B cell (primary cell): ENCODE measurements at regions of chr2 and their contacts with region 1.

Region 1: DNA sequence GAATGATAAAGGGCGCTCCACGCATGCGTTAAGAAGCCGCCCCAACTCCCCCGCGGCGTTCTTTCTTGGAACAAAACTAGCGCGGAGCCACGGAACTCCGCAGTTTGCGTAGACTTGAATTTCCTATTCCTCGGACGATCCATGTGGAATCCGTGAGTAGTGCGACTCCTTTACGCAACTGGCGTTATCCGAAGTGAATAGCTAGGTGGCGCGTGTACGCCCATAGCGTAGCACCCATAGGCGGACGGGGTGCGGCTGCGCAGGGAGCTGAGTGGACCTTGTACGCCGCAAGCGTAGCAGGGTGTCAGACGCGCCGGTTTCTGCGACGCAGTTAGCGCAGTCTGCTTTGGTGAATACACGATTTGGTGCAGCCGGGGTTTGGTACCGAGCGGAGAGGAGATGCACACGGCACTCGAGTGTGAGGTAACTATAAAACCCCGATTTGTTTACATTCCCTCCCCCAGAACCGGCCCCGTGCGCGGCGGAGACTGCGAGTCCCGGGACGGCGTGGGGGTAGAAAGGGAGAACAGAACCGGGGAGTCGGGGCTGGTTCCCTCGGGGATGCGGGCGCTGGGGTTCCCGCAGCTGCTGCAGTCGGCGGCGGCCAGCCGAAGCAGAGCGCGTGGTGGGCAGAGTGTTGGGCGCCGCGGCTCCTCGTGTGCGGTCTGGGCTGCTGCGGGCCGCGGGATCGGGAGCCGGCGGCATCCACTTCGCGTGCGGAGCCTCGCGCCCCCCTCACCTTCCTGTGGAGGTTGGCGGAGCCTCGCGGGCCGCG is at the start of gene SLC39A10:
- DNase-seq: peak; percentile 100
- ATAC-seq: peak; percentile 86
- H3K4me3 ChIP-seq: peak within 1 kb of the TSS; percentile 87 to 96 (median 93)
- H3K4me3 Mint-ChIP-seq: peak within 1 kb of the TSS; percentile 100
- H3K27ac ChIP-seq: peak within 1 kb of the TSS; percentile 98 to 99
- H3K27ac Mint-ChIP-seq: peak within 1 kb of the TSS; percentile 99
- H3K4me1 ChIP-seq: peaks cover 30 to 39% of the 10 kb centered on the region in 2 donors
- H3K4me1 Mint-ChIP-seq: peaks cover 55% of the 10 kb centered on the region
- H3K27me3 ChIP-seq: no peaks in the 10 kb centered on the region
- H3K27me3 Mint-ChIP-seq: no peaks in the 10 kb centered on the region
- CTCF ChIP-seq: no peak
- total RNA-seq, gene SLC39A10: 99.3 and 99.8 TPM in 2 replicates

Region 2: DNA sequence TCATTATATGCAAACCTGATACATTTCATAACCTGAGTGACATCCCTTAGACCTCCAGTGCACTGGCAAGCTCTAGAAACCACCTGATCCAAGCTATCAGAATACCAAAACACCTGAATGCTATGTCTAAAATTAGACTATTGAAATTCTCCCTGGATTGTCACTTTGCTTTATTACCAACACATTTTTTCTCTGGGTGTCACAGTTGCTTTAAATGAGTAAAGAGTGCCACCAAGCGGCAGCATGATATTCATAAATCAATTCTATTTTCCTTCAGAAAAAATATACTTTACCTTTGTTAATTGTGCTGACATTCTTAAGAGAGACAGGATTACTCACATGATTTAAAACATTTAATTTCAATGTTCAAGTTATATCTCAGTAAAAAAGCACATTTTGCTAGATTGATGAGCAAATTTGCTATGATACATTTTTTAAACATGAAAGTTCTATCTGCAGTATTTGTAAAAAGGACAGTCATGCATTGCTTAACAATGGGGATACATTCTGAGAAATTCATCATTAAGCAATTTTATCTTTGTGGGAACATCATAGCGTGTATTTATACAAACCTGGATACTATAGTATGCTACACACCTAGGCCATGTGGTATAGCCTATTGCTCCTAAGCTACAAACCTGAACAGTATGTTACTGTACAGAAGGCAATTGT is 338.5 kb before region 1 on chr2:
- CTCF ChIA-PET with region 1: interaction called, 11 read pairs
- POLR2A ChIA-PET with region 1: no interaction called
- intact Hi-C with region 1: no loop called
- DNase-seq: peak; percentile 53
- ATAC-seq: no peak
- H3K4me3 ChIP-seq: no peak overlapping the region
- H3K4me3 Mint-ChIP-seq: no peak overlapping the region
- H3K27ac ChIP-seq: no peak overlapping the region
- H3K27ac Mint-ChIP-seq: no peak overlapping the region
- H3K4me1 ChIP-seq: no peaks in the 10 kb centered on the region
- H3K4me1 Mint-ChIP-seq: no peaks in the 10 kb centered on the region
- H3K27me3 ChIP-seq: no peaks in the 10 kb centered on the region
- H3K27me3 Mint-ChIP-seq: no peaks in the 10 kb centered on the region
- CTCF ChIP-seq: peak; percentile 76

Region 3: GRCh38 chr2:195498176-195498575 is 158.9 kb before region 1 on chr2:
- CTCF ChIA-PET with region 1: interaction called, 192 read pairs
- POLR2A ChIA-PET with region 1: interaction called, 6 read pairs
- intact Hi-C with region 1: loop called (anchors 1 kb)
- DNase-seq: peak; percentile 75
- ATAC-seq: peak; percentile 36
- H3K4me3 ChIP-seq: no peak overlapping the region
- H3K4me3 Mint-ChIP-seq: no peak overlapping the region
- H3K27ac ChIP-seq: no peak overlapping the region
- H3K27ac Mint-ChIP-seq: peak overlapping the region; percentile 1
- H3K4me1 ChIP-seq: peaks cover 5 to 16% of the 10 kb centered on the region in 2 donors
- H3K4me1 Mint-ChIP-seq: peaks cover 19% of the 10 kb centered on the region
- H3K27me3 ChIP-seq: no peaks in the 10 kb centered on the region
- H3K27me3 Mint-ChIP-seq: no peaks in the 10 kb centered on the region
- CTCF ChIP-seq: peak; percentile 72

Region 4: GRCh38 chr2:195575879-195576401 is 81.1 kb before region 1 on chr2:
- CTCF ChIA-PET with region 1: interaction called, 279 read pairs
- POLR2A ChIA-PET with region 1: interaction called, 16 read pairs
- intact Hi-C with region 1: loop called (anchors 1 kb)
- DNase-seq: peak; percentile 85
- ATAC-seq: peak; percentile 91
- H3K4me3 ChIP-seq: peak overlapping the region in 4 of 5 experiments; percentile 9 to 40 (median 24)
- H3K4me3 Mint-ChIP-seq: peak overlapping the region; percentile 63
- H3K27ac ChIP-seq: peak overlapping the region; percentile 11 to 62
- H3K27ac Mint-ChIP-seq: peak overlapping the region; percentile 76
- H3K4me1 ChIP-seq: peaks cover 43 to 47% of the 10 kb centered on the region in 2 donors
- H3K4me1 Mint-ChIP-seq: peaks cover 54% of the 10 kb centered on the region
- H3K27me3 ChIP-seq: no peaks in the 10 kb centered on the region
- H3K27me3 Mint-ChIP-seq: no peaks in the 10 kb centered on the region
- CTCF ChIP-seq: peak; percentile 42

Region 5: DNA sequence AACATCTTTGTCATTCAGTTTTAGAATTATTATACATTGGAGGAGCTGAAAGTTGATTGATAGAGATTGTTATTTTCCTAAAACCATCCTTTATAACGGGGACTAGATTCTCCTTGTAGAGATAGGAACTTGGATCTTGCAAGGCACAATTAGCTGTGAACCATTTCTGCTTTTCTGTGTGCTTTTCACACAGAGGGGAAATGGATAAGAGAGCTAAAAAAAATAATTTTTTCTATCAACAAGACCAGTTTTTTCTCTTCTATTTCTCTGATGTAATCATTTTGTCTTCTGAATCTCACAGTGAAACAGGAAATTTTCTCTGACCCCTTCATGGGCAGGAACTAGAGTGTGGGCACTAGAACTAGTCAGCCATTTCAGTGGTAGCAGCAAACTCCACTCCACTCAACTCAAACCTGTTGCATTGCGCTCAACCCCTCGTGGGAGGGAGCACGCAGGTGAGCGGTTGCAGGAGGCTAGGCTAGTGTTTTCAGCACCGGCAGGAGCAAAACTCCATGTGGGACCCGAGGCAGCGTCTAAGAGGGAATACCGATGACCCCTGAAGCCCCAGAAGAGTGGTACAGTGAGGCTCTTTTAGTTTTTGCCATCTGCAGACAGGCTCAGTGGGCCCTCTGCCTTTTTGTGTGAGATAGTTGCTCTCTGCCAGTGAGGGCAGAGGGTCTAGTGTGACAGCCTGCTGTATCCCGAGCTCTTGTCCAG is 24.0 kb before region 1 on chr2:
- CTCF ChIA-PET with region 1: interaction called, 9 read pairs
- POLR2A ChIA-PET with region 1: interaction called, 11 read pairs
- intact Hi-C with region 1: no loop called
- DNase-seq: peak; percentile 28
- ATAC-seq: peak; percentile 36
- H3K4me3 ChIP-seq: peak overlapping the region in 1 of 5 experiments; percentile 11
- H3K4me3 Mint-ChIP-seq: peak overlapping the region; percentile 37
- H3K27ac ChIP-seq: peak overlapping the region; percentile 57 to 77
- H3K27ac Mint-ChIP-seq: peak overlapping the region; percentile 82
- H3K4me1 ChIP-seq: peaks cover 13 to 20% of the 10 kb centered on the region in 2 donors
- H3K4me1 Mint-ChIP-seq: peaks cover 19% of the 10 kb centered on the region
- H3K27me3 ChIP-seq: no peaks in the 10 kb centered on the region
- H3K27me3 Mint-ChIP-seq: no peaks in the 10 kb centered on the region
- CTCF ChIP-seq: no peak

Region 6: GRCh38 chr2:195694553-195694952 is 37.5 kb after region 1 on chr2:
- CTCF ChIA-PET with region 1: no interaction called
- POLR2A ChIA-PET with region 1: no interaction called
- intact Hi-C with region 1: no loop called
- DNase-seq: no peak
- ATAC-seq: no peak
- H3K4me3 ChIP-seq: no peak overlapping the region
- H3K4me3 Mint-ChIP-seq: peak overlapping the region; percentile 8
- H3K27ac ChIP-seq: no peak overlapping the region
- H3K27ac Mint-ChIP-seq: peak overlapping the region; percentile 43
- H3K4me1 ChIP-seq: peaks cover 7% of the 10 kb centered on the region in 2 donors
- H3K4me1 Mint-ChIP-seq: peaks cover 56% of the 10 kb centered on the region
- H3K27me3 ChIP-seq: no peaks in the 10 kb centered on the region
- H3K27me3 Mint-ChIP-seq: no peaks in the 10 kb centered on the region
- CTCF ChIP-seq: no peak

Region 7: DNA sequence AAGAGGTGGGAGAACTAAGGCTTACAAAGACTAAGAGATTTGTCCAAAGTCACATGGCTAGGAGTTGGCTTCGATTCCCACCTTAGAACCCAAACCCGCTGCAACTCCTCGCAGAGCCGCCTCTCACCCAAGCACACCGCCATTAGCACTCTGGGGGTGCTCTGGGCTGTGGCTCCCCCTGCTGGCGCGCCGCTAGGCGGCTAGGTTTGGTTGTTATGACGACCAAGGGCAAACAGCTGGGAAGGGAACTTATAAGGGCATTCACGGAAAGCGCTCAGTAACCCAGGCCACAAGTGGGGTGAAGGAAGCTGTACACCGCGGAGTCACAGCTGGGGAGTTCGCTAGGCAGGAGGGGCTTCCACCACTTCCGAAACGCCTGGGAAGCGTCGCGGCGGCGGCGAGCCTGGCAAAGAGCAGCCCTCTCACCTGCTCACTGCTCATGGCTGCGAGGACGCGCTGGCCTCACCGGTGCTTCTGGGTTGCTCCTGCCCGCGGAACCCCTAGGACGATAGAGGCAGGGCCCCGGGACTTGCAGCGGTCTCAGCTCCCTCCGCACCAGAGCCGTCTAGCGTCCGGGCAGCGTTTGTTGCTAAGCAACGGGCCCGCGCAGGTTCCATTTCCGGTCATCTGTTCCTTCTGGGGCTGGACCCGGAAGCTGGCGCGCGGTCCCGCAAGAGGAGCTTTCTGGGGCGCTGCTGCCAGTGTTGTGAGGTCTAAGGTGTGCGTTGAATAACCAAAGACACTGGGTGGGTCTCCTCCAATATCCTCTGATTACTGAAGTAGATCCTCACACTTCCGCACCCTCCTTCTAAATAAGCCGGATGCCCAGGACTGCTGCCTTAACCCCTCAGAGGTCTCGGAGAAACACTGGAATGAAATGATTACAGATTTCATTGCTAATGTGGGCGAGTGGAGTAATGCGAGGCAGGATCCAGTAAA is 411.5 kb after region 1 on chr2 and contains the start of gene DNAH7:
- CTCF ChIA-PET with region 1: interaction called, 7 read pairs
- POLR2A ChIA-PET with region 1: no interaction called
- intact Hi-C with region 1: loop called (anchors 1 kb)
- DNase-seq: peak; percentile 96
- ATAC-seq: peak; percentile 92
- H3K4me3 ChIP-seq: peak within 1 kb of the TSS; percentile 46 to 81 (median 64)
- H3K4me3 Mint-ChIP-seq: peak within 1 kb of the TSS; percentile 96
- H3K27ac ChIP-seq: peak within 1 kb of the TSS; percentile 30 to 73
- H3K27ac Mint-ChIP-seq: peak within 1 kb of the TSS; percentile 93
- H3K4me1 ChIP-seq: peaks cover 12 to 13% of the 10 kb centered on the region in 2 donors
- H3K4me1 Mint-ChIP-seq: peaks cover 15% of the 10 kb centered on the region
- H3K27me3 ChIP-seq: no peaks in the 10 kb centered on the region
- H3K27me3 Mint-ChIP-seq: peaks cover 2% of the 10 kb centered on the region
- CTCF ChIP-seq: peak; percentile 97
- total RNA-seq, gene DNAH7: 0.05 TPM in 1 of 2 replicates, not detected in the other

Region 8: DNA sequence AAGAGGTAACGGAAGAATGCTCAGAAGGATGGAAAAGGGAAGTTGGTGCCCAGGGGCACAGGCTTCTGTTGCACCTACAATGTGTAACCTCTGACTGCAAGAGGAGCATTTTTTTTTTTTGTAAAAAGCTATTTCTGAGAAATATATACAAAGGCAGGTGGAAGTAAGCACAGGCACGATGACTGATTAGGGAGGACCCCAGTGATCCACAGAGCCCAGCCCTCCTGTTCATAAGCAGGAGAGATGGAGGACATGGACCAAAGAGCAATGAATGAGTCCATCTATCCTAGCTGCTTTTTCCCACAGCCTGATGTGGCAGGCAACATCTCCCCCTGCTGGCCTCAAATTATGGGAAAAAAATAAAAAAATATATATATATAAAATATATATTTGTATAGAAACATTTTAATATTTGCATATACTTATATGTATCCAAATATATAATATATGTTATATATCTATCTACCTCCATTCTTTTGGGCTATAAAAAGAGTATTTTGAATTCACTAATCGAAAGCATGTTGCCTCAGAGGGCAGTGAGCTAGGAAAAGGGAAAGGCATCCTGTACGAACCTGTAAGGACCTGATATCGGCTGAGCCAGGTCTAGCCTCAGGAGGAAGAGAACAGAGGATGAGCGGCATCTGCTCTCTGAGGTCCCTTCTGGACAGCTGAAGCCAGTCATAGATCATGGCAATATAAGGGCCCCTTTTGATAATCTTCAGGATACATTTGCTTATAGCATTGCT is 680.3 kb after region 1 on chr2:
- CTCF ChIA-PET with region 1: interaction called, 9 read pairs
- POLR2A ChIA-PET with region 1: no interaction called
- intact Hi-C with region 1: loop called (anchors 5 kb)
- DNase-seq: peak; percentile 58
- ATAC-seq: peak; percentile 51
- H3K4me3 ChIP-seq: no peak overlapping the region
- H3K4me3 Mint-ChIP-seq: no peak overlapping the region
- H3K27ac ChIP-seq: peak overlapping the region in 1 of 2 donors; percentile 52
- H3K27ac Mint-ChIP-seq: peak overlapping the region; percentile 43
- H3K4me1 ChIP-seq: peaks cover 10 to 11% of the 10 kb centered on the region in 2 donors
- H3K4me1 Mint-ChIP-seq: peaks cover 19% of the 10 kb centered on the region
- H3K27me3 ChIP-seq: no peaks in the 10 kb centered on the region
- H3K27me3 Mint-ChIP-seq: no peaks in the 10 kb centered on the region
- CTCF ChIP-seq: peak; percentile 66